ENCODE measurements at regions of chr4 and their contacts with region 1.

Region 1: GRCh38 chr4:111641955-111642579 is 503.2 kb upstream of the FAM241A start:
- DNase-seq: peak; percentile 60
- H3K4me3 ChIP-seq: no peak overlapping the region
- H3K27ac ChIP-seq: no peak overlapping the region
- H3K4me1 ChIP-seq: no peaks in the 10 kb centered on the region
- H3K27me3 ChIP-seq: no peaks in the 10 kb centered on the region
- CTCF ChIP-seq: peak in 3 of 4 experiments; percentile 72 to 81 (median 76)
- POLR2A ChIP-seq: no peak

Region 2: DNA sequence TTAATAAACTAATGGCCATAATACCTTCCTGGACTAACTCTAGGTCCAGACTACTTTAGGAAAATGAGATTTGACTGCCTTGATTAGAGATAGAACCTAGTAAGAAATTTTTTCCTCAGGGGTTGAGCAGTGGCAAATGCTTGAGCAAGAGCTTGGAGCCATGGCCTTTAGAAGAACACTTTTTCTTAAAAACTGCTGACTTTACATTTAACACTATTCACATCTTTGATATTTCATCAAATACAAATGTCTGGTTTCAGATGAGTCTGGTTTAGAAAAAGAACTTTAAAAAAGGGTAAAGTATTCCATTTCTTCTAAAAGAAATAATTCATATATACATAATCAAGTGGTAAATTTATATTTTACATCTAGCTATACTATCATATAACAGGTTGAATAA is 338.3 kb before region 1 on chr4:
- intact Hi-C with region 1: no loop called
- DNase-seq: no peak
- H3K4me3 ChIP-seq: no peak overlapping the region
- H3K27ac ChIP-seq: no peak overlapping the region
- H3K4me1 ChIP-seq: no peaks in the 10 kb centered on the region
- H3K27me3 ChIP-seq: no peaks in the 10 kb centered on the region
- CTCF ChIP-seq: no peak
- POLR2A ChIP-seq: no peak

Region 3: DNA sequence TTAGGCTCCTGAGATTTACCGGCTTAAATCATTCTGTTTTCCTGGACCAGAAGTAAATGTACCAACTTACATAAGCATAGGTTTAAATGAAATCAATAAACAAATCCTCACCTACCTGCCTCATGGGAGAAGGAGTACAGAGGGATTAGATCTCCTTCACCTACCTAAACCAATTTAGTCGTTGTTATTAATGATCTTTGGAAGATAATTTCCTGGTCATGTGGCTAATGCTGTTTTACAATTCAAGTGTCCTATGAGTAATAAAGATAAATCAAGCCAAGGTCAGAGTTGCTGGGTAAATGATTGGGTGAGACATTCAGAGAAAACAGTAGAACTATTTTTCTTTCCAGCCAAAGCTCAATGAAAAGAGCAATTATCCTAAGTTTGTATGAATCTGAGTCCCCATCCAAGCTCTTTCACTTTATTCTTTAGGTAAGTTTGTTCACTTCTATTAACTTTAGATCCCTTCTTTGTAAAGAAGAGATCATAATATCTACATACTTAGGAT is 80.2 kb after region 1 on chr4:
- intact Hi-C with region 1: no loop called
- DNase-seq: no peak
- H3K4me3 ChIP-seq: no peak overlapping the region
- H3K27ac ChIP-seq: no peak overlapping the region
- H3K4me1 ChIP-seq: no peaks in the 10 kb centered on the region
- H3K27me3 ChIP-seq: no peaks in the 10 kb centered on the region
- CTCF ChIP-seq: no peak
- POLR2A ChIP-seq: no peak

Region 4: GRCh38 chr4:111854494-111855087 is 212.5 kb after region 1 on chr4:
- intact Hi-C with region 1: loop called (anchors 5 kb)
- DNase-seq: peak; percentile 30
- H3K4me3 ChIP-seq: no peak overlapping the region
- H3K27ac ChIP-seq: no peak overlapping the region
- H3K4me1 ChIP-seq: no peaks in the 10 kb centered on the region
- H3K27me3 ChIP-seq: no peaks in the 10 kb centered on the region
- CTCF ChIP-seq: peak in 3 of 4 experiments; percentile 51 to 59 (median 53)
- POLR2A ChIP-seq: no peak

Measured in prostate gland (tissue), 2 donors.